ENCODE measurements at regions of chr5 and their contacts with region 1.

Region 1: DNA sequence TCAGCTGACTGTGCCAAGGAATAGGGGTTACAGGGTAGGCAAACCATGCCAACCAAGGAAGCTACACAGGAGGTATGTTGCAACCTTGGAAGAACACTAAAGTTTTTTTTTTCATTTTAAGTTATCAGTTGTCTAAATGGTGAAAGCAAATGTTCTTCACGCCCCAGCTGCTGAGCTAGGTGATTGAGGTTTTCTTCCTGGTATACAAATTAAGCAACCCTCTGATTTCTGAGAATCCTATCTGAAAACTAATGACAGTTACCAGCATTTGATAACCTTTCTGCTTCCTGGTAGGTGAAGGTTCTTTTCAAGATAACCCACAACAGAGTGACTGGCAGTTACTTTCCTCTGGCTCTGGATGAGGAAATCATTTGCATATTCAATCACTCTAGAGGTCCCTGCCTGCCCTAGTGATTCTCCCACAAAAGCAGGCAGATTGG is 194.9 kb downstream of the ATP10B start:
- DNase-seq: no peak
- H3K4me3 Mint-ChIP-seq: no peak overlapping the region
- H3K27ac Mint-ChIP-seq: no peak overlapping the region
- H3K4me1 Mint-ChIP-seq: peaks cover 16% of the 10 kb centered on the region
- H3K27me3 Mint-ChIP-seq: no peaks in the 10 kb centered on the region
- CTCF ChIP-seq: no peak

Region 2: DNA sequence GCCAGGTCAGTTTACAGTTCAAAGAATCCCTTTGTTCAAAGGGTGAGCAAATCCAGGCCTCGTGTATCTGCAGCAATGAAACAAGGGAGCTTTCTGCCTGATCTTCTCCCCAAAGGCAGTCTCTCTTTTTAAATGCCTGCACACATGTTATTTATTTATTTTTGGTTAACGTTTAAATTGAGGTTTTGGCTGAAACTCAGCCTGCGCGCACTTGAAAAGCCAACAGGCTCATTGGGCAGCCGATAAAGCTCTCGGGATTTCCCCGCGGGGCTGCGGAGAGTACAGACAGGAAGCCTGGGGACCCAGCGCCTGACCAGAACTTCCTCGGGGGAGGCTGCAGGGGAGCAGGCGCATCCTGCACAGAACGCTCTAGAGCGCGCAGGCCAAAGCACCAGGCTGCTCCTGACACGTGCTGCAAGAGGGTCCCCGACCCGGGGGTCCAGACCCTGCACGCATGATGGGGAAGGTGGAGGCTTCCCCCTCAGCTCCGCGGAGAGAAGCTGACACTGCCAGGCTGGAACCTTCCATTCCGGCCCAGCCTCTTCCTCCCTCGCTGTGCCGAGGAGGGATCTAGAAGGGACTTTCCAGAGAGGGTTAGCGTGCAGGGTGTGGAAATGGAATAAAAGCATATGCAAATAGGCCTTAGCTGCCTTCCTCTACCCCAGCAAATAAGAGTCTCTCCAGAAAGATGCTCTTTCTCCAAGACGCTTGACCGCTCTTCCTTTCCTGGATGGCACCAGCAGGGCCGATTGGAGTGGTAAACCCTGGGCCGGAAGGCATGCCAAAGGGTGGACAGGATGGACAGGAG is 189.3 kb before region 1 on chr5:
- CTCF ChIA-PET with region 1: no interaction called
- intact Hi-C with region 1: no loop called
- DNase-seq: peak; percentile 95
- H3K4me3 Mint-ChIP-seq: peak overlapping the region; percentile 89
- H3K27ac Mint-ChIP-seq: peak overlapping the region; percentile 95
- H3K4me1 Mint-ChIP-seq: peaks cover 86% of the 10 kb centered on the region
- H3K27me3 Mint-ChIP-seq: no peaks in the 10 kb centered on the region
- CTCF ChIP-seq: no peak

Region 3: DNA sequence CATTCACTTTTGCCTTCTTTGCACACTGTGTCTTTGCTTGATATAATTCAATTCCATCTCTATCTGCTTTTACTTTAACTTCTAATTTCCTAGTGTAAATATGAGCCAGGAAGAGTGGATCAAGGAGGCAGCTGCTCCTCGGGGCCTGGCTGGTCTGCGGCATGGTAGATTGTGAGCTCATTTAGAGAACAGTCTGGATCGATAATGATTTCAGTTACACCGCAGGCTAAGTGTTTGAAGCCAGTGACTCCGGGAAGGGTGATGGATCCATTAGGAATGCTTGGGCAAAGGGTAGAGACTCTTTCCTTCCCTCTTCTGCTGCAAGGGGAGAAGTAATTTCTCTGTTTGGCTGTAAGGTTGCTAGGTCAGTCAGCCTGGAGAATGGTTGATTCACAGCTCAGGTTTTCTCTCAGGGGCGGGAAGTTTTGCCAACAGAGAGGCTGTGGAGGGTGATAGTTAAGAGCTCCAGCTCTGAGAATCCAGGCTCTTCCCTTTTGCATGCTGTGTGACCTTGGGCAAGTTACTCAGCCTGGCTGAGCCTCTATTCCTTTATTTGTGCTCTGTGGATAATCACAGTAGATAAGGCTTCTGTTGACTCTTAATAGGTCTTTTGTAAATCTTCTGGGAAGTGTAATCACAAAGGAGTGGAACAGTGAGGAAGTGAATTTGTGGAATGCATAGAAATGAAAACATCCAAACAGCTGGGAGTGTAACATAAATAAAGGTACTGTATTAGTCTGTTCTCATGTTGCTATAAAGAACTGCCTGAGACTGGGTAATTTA is 136.3 kb before region 1 on chr5:
- CTCF ChIA-PET with region 1: no interaction called
- intact Hi-C with region 1: loop called (anchors 10 kb)
- DNase-seq: peak; percentile 46
- H3K4me3 Mint-ChIP-seq: no peak overlapping the region
- H3K27ac Mint-ChIP-seq: peak overlapping the region; percentile 21
- H3K4me1 Mint-ChIP-seq: peaks cover 14% of the 10 kb centered on the region
- H3K27me3 Mint-ChIP-seq: no peaks in the 10 kb centered on the region
- CTCF ChIP-seq: no peak